Right ventricle myocardium inferior (tissue), 1 donor: ENCODE measurements at regions of chr20 and their contacts with region 1.

Region 1: DNA sequence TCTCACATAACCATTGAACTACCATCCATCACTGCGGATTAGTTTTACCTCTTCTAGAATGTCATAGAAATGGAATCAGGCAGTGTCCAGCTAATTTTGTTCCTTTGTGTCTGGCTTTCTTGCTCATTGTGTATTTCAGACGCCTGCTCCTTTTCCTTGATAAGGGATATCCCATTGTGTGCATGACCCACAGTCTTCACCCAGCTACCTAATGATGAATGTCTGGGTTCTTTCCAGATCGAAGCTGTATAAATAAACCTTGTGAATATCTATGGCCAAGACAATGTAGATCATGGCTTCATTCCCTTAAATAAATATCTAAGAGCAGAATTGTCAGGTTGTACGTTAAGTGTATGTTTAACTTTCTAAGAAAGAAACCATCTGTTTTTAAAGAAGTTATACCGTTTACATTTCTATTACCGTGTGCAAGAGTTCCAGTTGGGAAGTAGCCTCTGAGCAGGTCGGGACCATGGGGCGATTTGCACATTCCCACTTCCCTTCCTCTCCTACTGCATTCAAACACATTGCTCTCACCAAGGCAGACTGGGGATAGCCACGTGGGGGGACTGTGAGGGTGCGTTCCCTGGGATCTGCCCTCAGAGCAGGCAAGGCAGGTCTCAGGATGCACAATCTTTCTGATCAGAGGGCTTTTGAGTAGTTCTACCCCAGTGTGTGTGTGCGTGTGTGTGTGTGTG is 13.1 kb downstream of the CD93 start:
- DNase-seq: no peak
- ATAC-seq: no peak

Region 2: GRCh38 chr20:23180451-23180921 is 107.4 kb after region 1 on chr20:
- intact Hi-C with region 1: loop called (anchors 5 kb)
- DNase-seq: peak; percentile 68
- ATAC-seq: peak; percentile 90